PC-9 (cell line): ENCODE measurements at regions of chr15 and their contacts with region 1.

Region 1: GRCh38 chr15:55074431-55074830 is 122.3 kb downstream of the RSL24D1 start:
- DNase-seq: no peak
- H3K4me3 ChIP-seq: no peak overlapping the region
- H3K27ac ChIP-seq: no peak overlapping the region
- H3K4me1 ChIP-seq: no peaks in the 10 kb centered on the region
- H3K27me3 ChIP-seq: no peaks in the 10 kb centered on the region
- CTCF ChIP-seq: no peak

Region 2: DNA sequence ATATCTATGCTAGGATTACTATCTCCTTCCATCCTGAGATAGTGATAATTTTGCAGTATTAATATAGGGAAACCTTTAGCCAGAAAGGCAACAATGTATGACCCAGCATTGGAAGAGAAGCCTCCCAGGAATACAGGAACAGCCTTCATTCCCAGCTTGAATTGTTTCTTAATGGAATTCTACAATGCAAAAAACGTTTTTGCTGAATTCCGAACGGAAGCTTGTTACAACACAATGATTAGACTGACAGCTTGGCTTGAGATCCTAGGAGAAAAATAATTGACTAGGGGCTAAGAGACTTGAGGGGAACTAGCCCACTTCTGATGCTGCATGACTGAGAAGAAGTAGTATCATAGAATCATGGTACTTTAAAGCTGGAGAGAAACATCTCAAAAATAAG is 17.9 kb before region 1 on chr15:
- CTCF ChIA-PET with region 1: no interaction called
- POLR2A ChIA-PET with region 1: interaction called, 10 read pairs
- intact Hi-C with region 1: no loop called
- DNase-seq: no peak
- H3K4me3 ChIP-seq: no peak overlapping the region
- H3K27ac ChIP-seq: no peak overlapping the region
- H3K4me1 ChIP-seq: no peaks in the 10 kb centered on the region
- H3K27me3 ChIP-seq: no peaks in the 10 kb centered on the region
- CTCF ChIP-seq: no peak